ENCODE measurements at regions of chr20 and their contacts with region 1.

Region 1: GRCh38 chr20:38113401-38114325 is 51.4 kb downstream of the TGM2 start:
- DNase-seq: no peak
- ATAC-seq: no peak

Region 2: GRCh38 chr20:38094373-38094891 is 19.2 kb before region 1 on chr20:
- intact Hi-C with region 1: loop called (anchors 2 kb)
- DNase-seq: peak; percentile 79
- ATAC-seq: peak; percentile 47

Region 3: DNA sequence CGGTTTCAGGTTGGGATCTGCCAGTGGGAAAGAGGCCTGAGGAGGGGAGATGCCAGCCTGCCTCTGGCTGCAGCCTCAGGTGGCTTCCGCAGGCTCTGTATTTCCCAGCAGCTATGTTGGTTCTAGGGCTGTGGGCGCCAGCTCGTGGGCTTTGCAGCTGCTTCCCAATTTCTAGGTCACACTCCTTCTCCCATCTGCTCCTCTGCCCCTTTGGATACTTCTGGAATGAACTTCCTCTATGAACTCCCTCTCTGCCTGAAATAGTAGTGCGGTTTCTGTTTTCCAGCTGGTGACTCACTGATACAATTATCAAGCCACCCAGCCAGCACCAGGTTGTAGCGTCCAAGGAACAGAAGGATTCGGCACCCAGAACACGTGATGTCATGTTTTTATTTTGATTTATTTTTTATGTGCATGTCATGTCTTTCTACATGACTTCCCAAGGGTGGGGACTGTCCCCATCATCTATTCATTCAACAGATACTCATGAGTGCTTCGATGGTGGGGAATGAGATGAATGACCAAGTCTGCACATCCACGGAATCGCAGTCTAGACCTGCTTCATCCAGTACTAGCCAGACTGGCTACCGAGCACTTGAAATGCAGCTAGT is 13.5 kb after region 1 on chr20:
- intact Hi-C with region 1: loop called (anchors 1 kb)
- DNase-seq: no peak
- ATAC-seq: peak; percentile 67

Measured in Right ventricle myocardium inferior (tissue), 1 donor.